Activated CD4-positive, alpha-beta T cell treated with anti-CD3 and anti-CD28 coated beads, Interleukin-2, amount 10 ng/mL, durations not matched to agents 24 days and 14 days (primary cell): ENCODE measurements at regions of chr1 and their contacts with region 1.

Region 1: DNA sequence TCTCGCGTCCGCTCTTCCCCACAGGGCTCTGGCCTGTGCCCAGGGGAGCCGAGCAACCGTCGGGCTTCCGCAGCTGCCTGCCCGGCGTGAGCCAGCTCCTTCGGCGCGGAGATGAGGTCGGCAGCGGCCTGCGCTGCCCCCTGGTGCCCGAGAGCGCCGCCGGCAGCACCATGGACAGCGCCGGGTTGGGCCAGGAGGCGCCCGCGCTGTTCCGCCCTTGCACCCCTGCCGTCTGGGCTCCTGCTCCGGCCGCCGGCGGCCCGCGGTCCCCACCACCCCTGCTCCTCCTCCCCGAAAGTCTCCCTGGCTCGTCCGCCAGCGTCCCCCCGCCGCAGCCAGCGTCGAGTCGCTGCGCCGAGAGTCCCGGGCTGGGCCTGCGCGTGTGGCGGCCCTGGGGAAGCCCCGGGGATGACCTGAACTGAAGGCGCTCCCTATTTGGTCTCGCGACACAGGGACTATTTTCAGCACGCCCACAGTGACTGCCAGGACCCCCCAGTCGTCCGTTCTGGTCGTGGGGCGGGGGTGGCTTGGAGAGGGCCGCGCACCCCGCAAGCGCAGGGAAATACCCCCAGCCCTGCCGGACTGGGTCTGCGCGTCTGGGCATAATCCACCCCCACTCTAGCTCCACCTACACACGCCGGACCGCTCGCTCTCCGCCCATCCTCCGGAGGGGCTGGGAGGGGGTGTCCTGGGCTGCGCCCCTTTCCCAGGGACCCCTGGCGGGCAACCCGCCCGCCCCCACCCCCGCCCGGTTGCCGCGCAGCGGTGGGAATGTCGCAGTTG is 1.3 kb downstream of the HES3 start:
- DNase-seq: peak; percentile 96
- H3K4me3 Mint-ChIP-seq: no peak overlapping the region
- H3K27ac Mint-ChIP-seq: no peak overlapping the region
- H3K4me1 Mint-ChIP-seq: peaks cover 21% of the 10 kb centered on the region
- H3K27me3 Mint-ChIP-seq: peaks cover 60% of the 10 kb centered on the region

Region 2: DNA sequence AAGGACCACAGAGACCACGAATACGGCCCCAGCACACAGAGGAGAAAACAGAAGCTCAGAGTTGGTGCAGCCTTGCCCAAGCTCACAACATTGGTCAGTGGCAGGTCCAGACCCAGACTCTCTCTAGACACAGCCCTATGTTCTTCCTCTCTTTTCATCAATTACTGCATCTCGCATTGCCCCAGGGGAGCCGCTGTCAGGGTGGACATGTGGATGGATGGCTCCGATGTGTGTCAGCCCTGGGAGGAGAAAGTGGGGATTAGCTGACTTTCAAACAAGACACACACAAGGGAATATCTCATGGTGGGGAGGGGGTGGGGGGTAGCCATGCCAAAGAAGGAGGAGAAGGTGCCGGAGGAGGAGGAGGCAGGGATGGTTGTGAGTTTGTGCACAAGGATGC is 809.9 kb before region 1 on chr1:
- intact Hi-C with region 1: no loop called
- DNase-seq: no peak
- H3K4me3 Mint-ChIP-seq: no peak overlapping the region
- H3K27ac Mint-ChIP-seq: no peak overlapping the region
- H3K4me1 Mint-ChIP-seq: no peaks in the 10 kb centered on the region
- H3K27me3 Mint-ChIP-seq: peaks cover 17% of the 10 kb centered on the region

Region 3: DNA sequence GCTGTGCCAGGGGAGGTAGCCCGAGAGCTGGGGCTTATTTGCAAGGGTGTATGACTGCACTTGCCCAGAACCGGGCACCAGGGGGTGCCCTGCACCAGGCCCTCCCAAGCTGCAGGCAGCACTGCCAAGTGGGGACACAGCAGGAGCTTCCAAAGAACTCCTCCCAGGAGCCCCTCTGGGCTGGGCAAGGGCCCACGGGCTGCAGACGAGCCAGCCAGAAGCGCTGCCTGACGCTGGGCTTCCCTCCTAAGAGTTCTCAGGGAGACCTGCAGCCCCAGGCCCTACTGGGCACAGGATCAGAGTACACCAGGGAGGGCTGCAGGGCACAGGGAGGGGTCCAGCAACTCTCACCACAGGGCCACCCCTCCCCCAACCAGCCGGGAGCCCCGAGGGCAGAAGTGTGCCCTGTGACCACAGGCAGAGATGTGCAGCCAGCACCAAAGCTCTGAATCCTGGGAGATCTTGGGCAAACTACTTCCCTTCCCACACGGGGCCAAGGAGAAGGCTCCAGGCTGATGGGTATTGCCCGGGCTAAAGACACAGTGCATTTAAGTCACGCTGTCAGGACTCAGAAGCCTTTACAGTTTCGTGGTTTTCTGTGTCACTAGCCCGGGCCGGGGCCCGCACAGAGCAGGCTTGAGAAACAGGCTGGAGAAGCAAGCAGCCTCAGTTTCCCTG is 136.2 kb before region 1 on chr1:
- intact Hi-C with region 1: loop called (anchors 1 kb)
- DNase-seq: peak; percentile 83
- H3K4me3 Mint-ChIP-seq: no peak overlapping the region
- H3K27ac Mint-ChIP-seq: no peak overlapping the region
- H3K4me1 Mint-ChIP-seq: no peaks in the 10 kb centered on the region
- H3K27me3 Mint-ChIP-seq: peaks cover 2% of the 10 kb centered on the region

Region 4: GRCh38 chr1:6317098-6317760 is 72.0 kb after region 1 on chr1:
- intact Hi-C with region 1: no loop called
- DNase-seq: no peak
- H3K4me3 Mint-ChIP-seq: no peak overlapping the region
- H3K27ac Mint-ChIP-seq: no peak overlapping the region
- H3K4me1 Mint-ChIP-seq: no peaks in the 10 kb centered on the region
- H3K27me3 Mint-ChIP-seq: no peaks in the 10 kb centered on the region

Region 5: DNA sequence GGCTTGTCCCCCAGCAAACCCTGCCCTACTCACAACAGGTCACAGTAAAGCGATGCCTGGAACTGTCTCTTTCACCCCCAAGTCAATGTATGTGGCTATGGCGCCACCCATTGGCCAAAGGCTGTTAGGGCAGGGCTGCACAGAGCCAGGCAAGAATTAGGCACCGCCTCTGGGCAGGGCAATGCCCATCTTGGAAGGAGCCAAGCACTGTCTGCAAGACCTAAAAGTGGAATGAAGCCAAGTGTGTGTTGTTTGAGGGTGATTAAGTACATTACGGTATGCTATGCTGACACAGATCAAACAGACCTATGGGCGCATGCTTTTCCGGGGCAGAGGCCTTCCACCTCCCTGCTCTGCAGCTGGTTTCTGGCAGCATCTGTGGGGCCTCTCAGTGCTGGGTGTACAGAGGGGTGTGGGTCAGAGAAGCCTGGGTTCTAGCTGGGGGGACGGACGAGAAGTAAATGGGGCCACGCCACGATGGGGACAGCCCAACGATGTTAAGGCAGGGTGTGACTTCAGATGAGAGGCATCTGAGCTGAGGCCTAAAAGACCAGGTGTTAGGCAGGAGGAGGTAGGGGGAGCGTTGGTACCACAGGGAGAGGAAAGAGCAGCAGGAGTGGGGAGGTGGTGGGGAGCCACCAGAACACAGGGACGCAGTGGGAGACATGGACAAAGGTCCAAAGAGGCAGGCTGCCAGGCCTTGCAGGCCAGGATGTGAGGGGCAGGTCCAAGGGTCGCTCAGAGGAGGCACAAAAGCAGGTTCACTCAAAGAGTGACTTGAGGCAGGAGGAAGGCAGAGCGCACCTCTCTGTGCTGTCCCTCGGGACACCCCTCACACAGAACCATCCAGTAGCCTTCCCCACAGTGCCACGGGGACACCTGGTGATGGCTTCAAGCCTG is 98.5 kb after region 1 on chr1:
- intact Hi-C with region 1: loop called (anchors 1 kb)
- DNase-seq: peak; percentile 92
- H3K4me3 Mint-ChIP-seq: no peak overlapping the region
- H3K27ac Mint-ChIP-seq: no peak overlapping the region
- H3K4me1 Mint-ChIP-seq: peaks cover 11% of the 10 kb centered on the region
- H3K27me3 Mint-ChIP-seq: no peaks in the 10 kb centered on the region

Region 6: DNA sequence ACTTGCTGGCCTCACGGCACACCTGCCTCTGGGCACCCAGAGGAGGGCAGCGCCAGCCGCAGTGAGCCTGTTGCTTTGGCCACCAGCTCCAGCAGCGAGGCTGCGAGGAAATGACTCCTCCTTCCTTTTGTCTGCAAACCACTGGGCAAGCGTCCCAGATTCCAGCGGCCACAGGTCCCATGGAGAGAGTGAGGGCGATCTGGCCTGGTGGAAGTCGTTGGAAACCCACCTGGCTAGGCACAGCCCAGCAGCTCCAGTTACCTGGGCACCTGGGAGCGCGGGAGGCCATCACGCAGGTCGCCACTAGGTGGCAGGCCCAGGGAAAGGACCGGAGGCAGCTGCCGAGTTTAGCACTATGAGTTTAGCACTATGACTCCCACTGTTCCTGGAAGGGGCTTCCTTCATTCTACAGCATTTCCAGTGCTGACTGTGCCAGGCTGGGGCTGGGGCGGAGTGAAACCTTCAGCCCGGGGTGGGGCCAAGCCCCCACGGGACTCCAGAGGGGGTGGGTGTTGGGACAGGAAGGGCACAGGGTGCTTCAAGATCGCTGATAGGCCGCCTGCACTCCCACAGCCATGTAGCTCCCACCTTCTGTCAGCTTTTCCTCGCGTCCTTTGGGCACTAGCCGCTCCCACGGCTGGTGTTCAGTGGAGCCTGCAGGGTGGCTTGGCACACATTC is 178.2 kb after region 1 on chr1:
- intact Hi-C with region 1: loop called (anchors 5 kb)
- DNase-seq: peak; percentile 92
- H3K4me3 Mint-ChIP-seq: peak overlapping the region; percentile 63
- H3K27ac Mint-ChIP-seq: no peak overlapping the region
- H3K4me1 Mint-ChIP-seq: peaks cover 12% of the 10 kb centered on the region
- H3K27me3 Mint-ChIP-seq: peaks cover 50% of the 10 kb centered on the region

Region 7: GRCh38 chr1:6489799-6490180 is 244.5 kb after region 1 on chr1:
- intact Hi-C with region 1: loop called (anchors 5 kb)
- DNase-seq: peak; percentile 95
- H3K4me3 Mint-ChIP-seq: peak overlapping the region; percentile 81
- H3K27ac Mint-ChIP-seq: peak overlapping the region; percentile 83
- H3K4me1 Mint-ChIP-seq: peaks cover 20% of the 10 kb centered on the region
- H3K27me3 Mint-ChIP-seq: peaks cover 13% of the 10 kb centered on the region